ENCODE measurements at regions of chr10 and their contacts with region 1.

Region 1: GRCh38 chr10:62231371-62231770 is 37.3 kb downstream of the RTKN2 start:
- DNase-seq: peak; percentile 92
- ATAC-seq: peak; percentile 56
- H3K4me3 ChIP-seq: no peak overlapping the region
- H3K27ac ChIP-seq: peak overlapping the region; percentile 100; the same call in 1 of the 2 replicates
- H3K4me1 ChIP-seq: peaks cover 20% of the 10 kb centered on the region
- H3K27me3 ChIP-seq: no peaks in the 10 kb centered on the region
- CTCF ChIP-seq: no peak
- POLR2A ChIP-seq: no peak
- RAD21 ChIP-seq: no peak

Region 2: DNA sequence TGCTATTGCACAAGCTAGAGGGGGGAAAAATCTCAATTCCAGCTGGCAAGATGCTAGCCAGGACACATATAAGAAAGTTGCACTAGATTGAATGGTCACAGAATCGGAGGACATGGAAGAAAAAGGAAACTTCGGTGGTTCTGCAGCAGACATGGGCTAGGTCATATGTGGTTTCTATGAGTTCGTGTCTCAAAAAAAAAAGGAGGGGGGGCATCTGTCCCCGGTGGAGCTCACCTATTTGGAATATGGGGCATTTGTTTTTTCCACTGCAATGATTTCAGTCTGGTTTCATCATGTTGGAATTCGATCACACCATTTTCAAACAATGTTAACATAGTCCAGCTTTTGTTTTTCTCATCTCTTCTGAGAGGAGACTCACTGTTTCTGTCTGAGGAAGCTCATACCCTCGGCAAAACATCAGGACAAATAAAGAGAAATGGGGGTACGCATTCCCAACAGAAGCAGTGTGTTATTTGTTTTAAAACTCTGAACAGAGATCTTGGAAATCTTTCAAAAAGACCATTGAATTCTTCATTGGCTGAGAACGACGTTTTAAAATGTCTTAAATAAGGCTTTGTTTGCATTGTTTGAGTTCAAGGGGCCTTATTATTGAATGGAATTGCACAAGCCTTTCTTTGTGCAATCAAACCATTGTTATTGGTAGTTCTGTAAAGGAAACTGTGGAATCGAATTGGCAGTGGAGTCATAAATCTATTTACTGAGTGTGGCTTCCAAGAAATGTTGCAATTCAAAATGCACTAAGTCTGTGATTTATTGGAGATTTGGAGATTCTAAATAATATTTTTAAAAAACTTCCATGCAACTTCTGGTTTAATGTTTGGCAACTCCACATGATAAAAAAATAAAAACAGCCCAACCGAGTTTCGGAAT is 135.9 kb before region 1 on chr10:
- CTCF ChIA-PET with region 1: no interaction called
- POLR2A ChIA-PET with region 1: interaction called, 3 read pairs
- dilution Hi-C with region 1: no loop called
- in situ Hi-C with region 1: loop called (anchors 5 kb)
- intact Hi-C with region 1: loop called (anchors 2 kb)
- DNase-seq: peak; percentile 69
- ATAC-seq: no peak
- H3K4me3 ChIP-seq: no peak overlapping the region
- H3K27ac ChIP-seq: peak overlapping the region; percentile 98; the same call in 1 of the 2 replicates
- H3K4me1 ChIP-seq: peaks cover 39% of the 10 kb centered on the region
- H3K27me3 ChIP-seq: no peaks in the 10 kb centered on the region
- CTCF ChIP-seq: no peak
- POLR2A ChIP-seq: no peak
- RAD21 ChIP-seq: no peak

Region 3: GRCh38 chr10:62106929-62107532 is 124.3 kb before region 1 on chr10:
- CTCF ChIA-PET with region 1: no interaction called
- POLR2A ChIA-PET with region 1: interaction called, 10 read pairs
- dilution Hi-C with region 1: no loop called
- in situ Hi-C with region 1: no loop called
- intact Hi-C with region 1: no loop called
- DNase-seq: no peak
- ATAC-seq: no peak
- H3K4me3 ChIP-seq: no peak overlapping the region
- H3K27ac ChIP-seq: no peak overlapping the region
- H3K4me1 ChIP-seq: peaks cover 5% of the 10 kb centered on the region; the same call in 1 of the 2 replicates
- H3K27me3 ChIP-seq: no peaks in the 10 kb centered on the region
- CTCF ChIP-seq: no peak
- POLR2A ChIP-seq: no peak
- RAD21 ChIP-seq: no peak

Region 4: GRCh38 chr10:62149621-62150020 is 81.8 kb before region 1 on chr10:
- CTCF ChIA-PET with region 1: no interaction called
- POLR2A ChIA-PET with region 1: no interaction called
- dilution Hi-C with region 1: no loop called
- in situ Hi-C with region 1: no loop called
- intact Hi-C with region 1: no loop called
- DNase-seq: no peak
- ATAC-seq: no peak
- H3K4me3 ChIP-seq: no peak overlapping the region
- H3K27ac ChIP-seq: no peak overlapping the region; the same call in 1 of the 2 replicates
- H3K4me1 ChIP-seq: peaks cover 7% of the 10 kb centered on the region
- H3K27me3 ChIP-seq: no peaks in the 10 kb centered on the region
- CTCF ChIP-seq: no peak
- POLR2A ChIP-seq: no peak
- RAD21 ChIP-seq: no peak

Region 5: DNA sequence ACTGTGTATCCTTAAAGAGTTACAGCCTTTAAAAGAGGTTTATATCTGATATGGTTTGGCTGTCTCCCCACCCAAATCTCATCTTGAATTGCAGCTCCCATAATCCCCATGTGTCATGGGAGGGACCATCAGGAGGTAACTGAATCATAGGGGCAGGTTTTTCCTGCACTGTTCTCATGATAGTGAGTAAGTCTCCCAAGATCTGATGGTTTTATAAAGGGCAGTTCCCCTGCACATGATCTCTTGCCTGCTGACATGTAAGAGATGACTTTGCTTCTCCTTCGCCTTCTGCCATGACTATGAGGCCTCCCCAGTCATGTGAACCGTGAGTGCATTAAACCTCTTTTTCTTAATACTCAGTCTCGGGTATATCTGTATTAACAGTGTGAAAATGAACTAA is 27.6 kb after region 1 on chr10:
- CTCF ChIA-PET with region 1: no interaction called
- POLR2A ChIA-PET with region 1: no interaction called
- dilution Hi-C with region 1: no loop called
- in situ Hi-C with region 1: no loop called
- intact Hi-C with region 1: no loop called
- DNase-seq: no peak
- ATAC-seq: no peak
- H3K4me3 ChIP-seq: no peak overlapping the region
- H3K27ac ChIP-seq: no peak overlapping the region
- H3K4me1 ChIP-seq: 0 out of 2 replicates have a peak, but pooled peaks cover 1% of the 10 kb centered on the region
- H3K27me3 ChIP-seq: no peaks in the 10 kb centered on the region
- CTCF ChIP-seq: no peak
- POLR2A ChIP-seq: no peak
- RAD21 ChIP-seq: no peak